IMR-90 (cell line): ENCODE measurements at regions of chr1 and their contacts with region 1.

Region 1: DNA sequence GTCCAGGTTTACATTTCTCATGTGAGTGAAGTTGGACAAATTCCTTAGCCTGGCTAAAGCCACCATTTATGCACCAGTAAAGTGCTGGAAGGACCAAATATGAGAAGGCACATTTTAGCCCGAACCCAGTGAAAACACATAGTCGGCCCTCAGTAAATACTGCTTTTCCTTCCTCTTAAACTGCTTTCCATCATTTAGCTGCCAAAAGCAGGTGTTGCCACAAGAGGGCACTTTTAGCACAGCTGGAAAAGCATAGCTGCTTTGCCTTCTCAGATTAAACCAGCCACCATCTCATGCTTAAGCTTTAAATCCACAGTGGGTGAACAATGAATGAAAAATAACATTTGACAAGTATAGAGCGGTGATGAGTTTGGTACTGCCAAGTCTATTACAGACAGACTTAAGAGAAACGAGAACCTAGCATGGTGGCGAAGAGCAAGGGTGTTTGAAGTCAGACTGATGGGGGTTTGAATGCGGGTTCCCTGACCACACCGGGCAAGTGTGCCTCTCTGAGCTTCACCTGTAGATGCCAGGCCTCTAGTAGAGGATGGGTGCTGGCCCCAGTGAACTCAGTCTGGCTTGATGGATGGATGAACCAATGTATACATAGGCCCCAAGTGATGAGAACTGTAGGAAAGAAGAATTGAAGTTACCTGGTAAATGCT is 57.8 kb downstream of the SLC35D1 start:
- DNase-seq: peak; percentile 77
- ATAC-seq: peak; percentile 84
- H3K4me3 ChIP-seq: no peak overlapping the region
- H3K27ac ChIP-seq: no peak overlapping the region
- H3K4me1 ChIP-seq: no peaks in the 10 kb centered on the region
- H3K27me3 ChIP-seq: no peaks in the 10 kb centered on the region
- CTCF ChIP-seq: peak; percentile 90
- POLR2A ChIP-seq: no peak
- RAD21 ChIP-seq: peak; percentile 97

Region 2: GRCh38 chr1:67053785-67054772 is 57.9 kb after region 1 on chr1 and contains the start of gene SLC35D1:
- CTCF ChIA-PET with region 1: interaction called, 4 read pairs
- POLR2A ChIA-PET with region 1: no interaction called
- dilution Hi-C with region 1: no loop called
- in situ Hi-C with region 1: no loop called
- intact Hi-C with region 1: loop called (anchors 1 kb)
- DNase-seq: peak; percentile 53
- ATAC-seq: peak; percentile 74
- H3K4me3 ChIP-seq: peak within 1 kb of the TSS; percentile 93
- H3K27ac ChIP-seq: peak within 1 kb of the TSS; percentile 90
- H3K4me1 ChIP-seq: peaks cover 8% of the 10 kb centered on the region
- H3K27me3 ChIP-seq: no peaks in the 10 kb centered on the region
- CTCF ChIP-seq: no peak
- POLR2A ChIP-seq: peak; percentile 82
- RAD21 ChIP-seq: no peak
- total RNA-seq, gene SLC35D1: 16.3 and 23.1 TPM in 2 replicates

Region 3: DNA sequence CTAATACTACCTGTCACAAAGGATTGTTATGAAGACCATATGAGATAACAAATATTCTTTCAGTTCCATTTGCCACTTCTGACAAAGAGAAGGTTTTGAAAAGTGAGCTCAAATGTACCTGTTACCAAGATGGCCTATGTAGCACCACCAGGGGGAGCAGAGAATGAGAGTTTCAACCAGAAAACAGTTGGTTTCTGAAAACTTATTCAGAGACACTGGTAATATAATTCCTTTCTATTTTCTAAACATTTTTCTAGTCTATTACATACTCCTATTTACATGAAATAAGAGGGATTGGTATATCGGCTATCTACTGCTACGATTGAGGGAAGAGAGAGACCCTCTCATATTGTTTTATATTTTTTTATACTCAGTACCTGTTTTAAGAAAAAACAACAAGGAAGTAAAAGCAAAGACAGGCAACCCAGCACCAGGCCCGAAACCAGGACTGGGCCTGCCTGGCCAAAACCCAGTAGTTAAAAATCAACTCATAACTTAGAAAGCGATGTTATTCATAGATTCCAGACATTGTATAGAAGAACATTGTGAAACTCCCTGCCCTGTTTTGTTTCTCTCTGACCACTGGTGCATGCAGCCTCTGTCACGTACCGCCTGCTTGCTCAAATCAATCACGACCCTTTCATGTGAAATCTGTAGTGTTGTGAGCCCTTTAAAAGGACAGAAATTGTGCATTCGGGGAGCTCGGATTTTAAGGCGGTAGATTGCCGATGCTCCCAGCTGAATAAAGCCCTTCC is 218.4 kb after region 1 on chr1:
- CTCF ChIA-PET with region 1: interaction called, 12 read pairs
- POLR2A ChIA-PET with region 1: interaction called, 14 read pairs
- dilution Hi-C with region 1: no loop called
- in situ Hi-C with region 1: no loop called
- intact Hi-C with region 1: loop called (anchors 2 kb)
- DNase-seq: peak; percentile 29
- ATAC-seq: peak; percentile 62
- H3K4me3 ChIP-seq: no peak overlapping the region
- H3K27ac ChIP-seq: no peak overlapping the region
- H3K4me1 ChIP-seq: no peaks in the 10 kb centered on the region
- H3K27me3 ChIP-seq: no peaks in the 10 kb centered on the region
- CTCF ChIP-seq: peak; percentile 55
- POLR2A ChIP-seq: no peak
- RAD21 ChIP-seq: peak; percentile 36